ENCODE measurements at regions of chr21 and their contacts with region 1.

Region 1: GRCh38 chr21:45482899-45483821 is 59.1 kb downstream of the SLC19A1 start:
- DNase-seq: peak in 5 of 10 donors; percentile 17 to 51 (median 38)
- ATAC-seq: peak; percentile 29 to 43
- H3K4me3 Mint-ChIP-seq: peak overlapping the region; percentile 69 to 88 (median 81)
- H3K27ac Mint-ChIP-seq: peak overlapping the region; percentile 89 to 98 (median 94)
- H3K4me1 Mint-ChIP-seq: peaks cover 20 to 43% (median 39%) of the 10 kb centered on the region in 4 donors
- H3K27me3 Mint-ChIP-seq: no peaks in the 10 kb centered on the region

Region 2: DNA sequence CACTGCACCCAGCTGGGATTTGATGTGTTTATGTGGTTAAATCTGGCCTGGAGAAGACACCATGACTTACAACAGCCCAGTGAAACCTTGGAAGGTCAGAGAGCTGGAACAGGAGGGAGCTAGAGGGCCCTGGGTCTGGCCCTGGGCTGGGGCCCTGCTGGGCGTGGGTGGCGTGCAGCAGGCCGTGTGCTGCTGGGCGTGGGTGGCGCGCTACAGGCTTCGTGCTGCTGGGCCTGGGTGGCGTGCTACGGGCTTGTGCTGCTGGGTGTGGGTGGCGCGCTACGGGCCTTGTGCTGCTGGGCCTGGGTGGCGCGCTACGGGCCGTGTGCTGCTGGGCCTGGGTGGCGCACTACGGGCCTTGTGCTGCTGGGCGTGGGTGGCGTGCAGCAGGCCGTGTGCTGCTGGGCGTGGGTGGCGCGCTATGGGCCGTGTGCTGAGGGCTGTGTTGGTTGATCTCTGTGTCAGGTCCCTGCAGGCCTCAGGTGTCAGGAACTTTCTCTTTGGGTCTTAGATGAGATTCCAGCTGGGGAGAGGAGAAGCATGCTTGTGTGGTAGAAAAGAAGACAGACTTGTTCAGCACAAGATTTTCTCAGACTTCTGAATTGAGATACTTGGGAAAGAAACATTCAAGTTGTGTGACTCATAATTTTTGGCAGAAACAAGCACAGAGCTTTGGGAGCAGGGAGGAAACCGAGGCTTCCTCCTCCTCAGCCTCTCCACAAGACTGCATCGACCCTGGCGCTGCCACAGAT is 12.2 kb before region 1 on chr21:
- POLR2A ChIA-PET with region 1: interaction called, 12 read pairs
- DNase-seq: peak in 4 of 10 donors; percentile 13 to 33 (median 22)
- ATAC-seq: peak; percentile 79 to 94
- H3K4me3 Mint-ChIP-seq: peak overlapping the region in 3 of 10 donors; percentile 21 to 36 (median 26)
- H3K27ac Mint-ChIP-seq: peak overlapping the region; percentile 15 to 93 (median 87)
- H3K4me1 Mint-ChIP-seq: peaks cover 3 to 22% (median 11%) of the 10 kb centered on the region in 4 donors
- H3K27me3 Mint-ChIP-seq: peaks cover 0 to 3% (median 0%) of the 10 kb centered on the region in 5 donors

Measured in naive thymus-derived CD8-positive, alpha-beta T cell (primary cell).